Posterior vena cava (tissue), 2 donors: ENCODE measurements at regions of chr5 and their contacts with region 1.

Region 1: GRCh38 chr5:146541958-146542849 is 26.2 kb upstream of the GPR151 start:
- DNase-seq: peak; percentile 91

Region 2: GRCh38 chr5:146528236-146528635 is 14.0 kb before region 1 on chr5:
- intact Hi-C with region 1: no loop called
- DNase-seq: no peak

Region 3: DNA sequence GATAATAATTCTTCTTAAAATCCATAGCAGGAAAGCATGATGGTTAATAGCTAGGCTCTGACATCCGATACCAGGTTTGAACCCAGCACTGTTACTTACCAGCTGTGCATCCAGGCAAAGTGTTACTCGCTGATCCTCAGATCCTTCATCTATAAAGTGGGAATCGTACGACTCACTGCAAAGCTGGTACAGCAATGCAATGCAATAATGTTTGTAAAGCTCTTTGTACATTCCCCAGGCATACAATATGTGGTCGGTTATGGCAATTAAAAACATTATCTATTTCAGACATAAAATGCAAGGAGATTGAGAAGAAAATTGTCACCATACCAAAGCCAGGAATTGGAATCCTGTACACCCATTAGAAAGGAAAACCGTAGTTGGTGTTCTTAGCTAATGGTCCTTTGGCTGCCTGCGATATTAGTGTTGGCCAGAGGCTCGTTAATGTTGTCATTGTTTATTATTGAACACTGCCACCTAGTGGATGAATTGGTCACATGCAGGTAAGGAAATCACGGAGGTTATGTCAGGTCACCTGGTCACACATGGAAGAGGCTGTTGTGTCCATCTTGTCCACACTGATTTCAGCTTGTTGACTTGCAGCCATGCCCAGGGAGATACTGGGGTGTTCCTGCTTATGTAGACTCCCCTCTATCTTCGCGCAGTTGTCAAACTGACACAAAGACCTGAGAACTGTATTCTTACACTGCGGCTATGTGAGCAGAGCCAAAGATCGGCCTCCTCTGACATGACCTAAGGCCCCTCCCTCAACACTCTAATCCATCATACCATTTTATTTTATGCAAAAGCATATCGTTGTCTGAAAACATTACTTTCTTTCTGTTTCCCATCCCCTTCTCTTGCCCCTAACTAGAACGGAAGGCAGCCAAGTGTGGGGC is 423.8 kb after region 1 on chr5:
- intact Hi-C with region 1: loop called (anchors 5 kb)
- DNase-seq: no peak

Region 4: GRCh38 chr5:147188200-147189108 is 646.2 kb after region 1 on chr5:
- intact Hi-C with region 1: loop called in 1 of 2 experiments (anchors 5 kb)
- DNase-seq: no peak